Motor neuron (in vitro differentiated cells): ENCODE measurements at regions of chr14 and their contacts with region 1.

Region 1: DNA sequence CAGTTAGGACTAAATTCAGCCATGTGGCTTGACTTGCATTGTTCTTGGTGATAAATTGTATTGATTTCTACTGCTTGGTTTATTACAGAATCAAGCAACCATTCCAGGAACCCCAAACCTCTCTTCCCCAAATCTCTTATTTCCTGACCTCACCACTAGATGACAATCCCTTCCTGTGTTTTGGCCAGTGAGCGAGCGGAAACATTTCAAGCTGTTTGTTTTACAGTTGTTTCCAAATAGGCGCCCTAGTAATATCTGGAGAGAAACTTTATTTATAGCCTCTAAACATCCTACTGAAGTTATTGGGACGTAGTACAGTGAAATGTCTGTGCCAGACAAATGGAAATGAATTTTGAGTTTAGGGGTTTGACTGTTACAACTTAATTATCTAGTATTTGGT is 161.1 kb downstream of the SNAPC1 start:
- ATAC-seq: no peak
- H3K4me3 ChIP-seq: no peak overlapping the region
- H3K27ac ChIP-seq: no peak overlapping the region
- H3K4me1 ChIP-seq: peaks cover 0 to 22% of the 10 kb centered on the region in 2 donors

Region 2: DNA sequence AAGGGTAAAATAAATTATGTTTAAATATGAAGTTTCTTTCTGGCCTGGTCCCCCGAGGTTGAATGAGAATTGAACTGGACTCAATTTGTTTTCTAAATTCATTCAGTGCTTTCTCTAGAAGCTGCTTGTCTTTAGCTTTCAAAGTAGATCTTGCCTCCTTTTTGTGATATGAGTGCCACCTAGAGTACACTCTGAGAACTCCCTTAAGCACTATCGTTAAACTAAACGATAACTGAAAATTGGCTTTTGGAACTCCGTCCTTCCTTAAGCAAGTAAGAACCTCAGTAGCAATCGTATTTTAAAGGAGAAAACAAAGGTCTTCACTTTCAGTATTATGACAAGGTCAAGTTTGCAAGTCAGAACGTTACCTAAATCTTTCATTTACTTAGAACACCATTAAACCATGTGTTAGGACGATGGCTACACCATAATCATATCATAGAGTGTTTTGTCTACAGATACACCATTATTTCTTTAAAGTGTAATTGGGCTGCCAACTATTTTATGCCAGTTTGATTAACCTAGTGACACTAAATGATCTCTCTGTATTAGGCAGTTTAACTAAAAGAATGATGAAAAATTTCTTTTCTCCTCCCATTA is 203.6 kb after region 1 on chr14:
- in situ Hi-C with region 1: loop called in 1 of 9 experiments (anchors 25 kb)
- ATAC-seq: peak; percentile 56 to 80 (median 63)
- H3K4me3 ChIP-seq: no peak overlapping the region
- H3K27ac ChIP-seq: no peak overlapping the region
- H3K4me1 ChIP-seq: no peaks in the 10 kb centered on the region

Region 3: GRCh38 chr14:62409626-62410300 is 486.4 kb after region 1 on chr14:
- in situ Hi-C with region 1: no loop called
- ATAC-seq: peak in 7 of 8 experiments; percentile 45 to 97 (median 89)
- H3K4me3 ChIP-seq: no peak overlapping the region
- H3K27ac ChIP-seq: peak overlapping the region in 1 of 2 donors; percentile 10
- H3K4me1 ChIP-seq: peaks cover 3 to 16% of the 10 kb centered on the region in 2 donors